PC-3 (cell line): ENCODE measurements at regions of chr3 and their contacts with region 1.

Region 1: DNA sequence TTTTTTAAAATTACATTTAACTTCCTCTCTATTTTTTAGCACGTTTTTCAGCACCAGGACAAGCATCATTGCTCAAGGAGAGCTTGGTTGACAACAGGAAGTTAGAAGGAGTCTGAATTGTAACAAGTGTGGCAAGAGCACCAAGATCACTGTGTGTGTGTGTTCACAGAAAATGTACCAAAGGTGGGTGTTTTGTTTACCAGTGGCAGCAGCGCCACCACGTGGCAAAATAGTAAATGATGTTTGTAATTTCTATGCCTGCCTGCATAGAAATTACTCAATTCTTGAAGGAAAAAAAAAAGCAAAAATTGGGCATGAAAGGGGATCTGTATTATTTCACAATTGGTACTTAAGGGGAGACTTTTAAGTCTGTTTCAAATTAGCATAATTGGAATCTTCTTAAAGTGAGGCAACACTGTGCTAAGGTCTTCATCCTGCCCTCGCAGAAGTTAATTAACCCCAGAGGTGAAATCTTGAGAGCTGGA is 7.4 kb upstream of the U2SURP start:
- DNase-seq: peak; percentile 72
- ATAC-seq: peak; percentile 45; the same call in 1 of the 2 replicates
- H3K4me3 ChIP-seq: no peak overlapping the region
- H3K27ac ChIP-seq: no peak overlapping the region
- H3K4me1 ChIP-seq: peaks cover 10% of the 10 kb centered on the region; the same call in 1 of the 2 replicates
- H3K27me3 ChIP-seq: no peaks in the 10 kb centered on the region
- CTCF ChIP-seq: peak; percentile 77

Region 2: GRCh38 chr3:142723968-142724681 is 269.9 kb before region 1 on chr3 and contains the start of gene TRPC1:
- CTCF ChIA-PET with region 1: no interaction called
- POLR2A ChIA-PET with region 1: no interaction called
- intact Hi-C with region 1: loop called (anchors 10 kb)
- DNase-seq: peak; percentile 67
- ATAC-seq: peak; percentile 87
- H3K4me3 ChIP-seq: peak within 1 kb of the TSS; percentile 92
- H3K27ac ChIP-seq: no peak within 1 kb of the TSS
- H3K4me1 ChIP-seq: no peaks in the 10 kb centered on the region
- H3K27me3 ChIP-seq: no peaks in the 10 kb centered on the region
- CTCF ChIP-seq: no peak
- total RNA-seq, gene TRPC1: 1.7 and 1.9 TPM in 2 replicates

Region 3: DNA sequence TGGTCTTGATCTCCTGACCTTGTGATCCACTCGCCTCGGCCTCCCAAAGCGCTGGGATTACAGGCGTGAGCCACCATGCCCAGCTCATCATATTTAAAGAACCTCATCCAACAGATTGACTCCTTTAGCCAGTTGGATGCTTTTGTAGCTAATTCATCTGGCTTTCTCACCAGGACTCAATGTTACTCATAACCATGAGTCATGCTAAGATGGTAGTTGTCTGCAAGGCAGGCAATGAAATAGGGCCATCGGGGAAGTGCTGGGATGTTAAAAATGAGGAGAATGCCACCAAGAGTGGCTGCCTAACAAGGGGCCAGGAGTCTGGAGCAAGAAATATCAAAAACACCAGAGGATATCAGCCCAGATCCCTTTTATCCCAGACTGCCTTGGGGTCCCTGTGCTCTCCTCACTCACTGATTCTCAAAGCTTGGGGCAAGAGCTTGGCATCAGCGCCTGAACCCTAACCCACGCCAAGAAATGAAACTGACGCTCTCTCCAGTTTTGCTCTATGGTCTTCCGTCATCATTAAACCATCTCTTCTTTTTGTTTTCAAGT is 97.7 kb before region 1 on chr3:
- CTCF ChIA-PET with region 1: no interaction called
- POLR2A ChIA-PET with region 1: no interaction called
- intact Hi-C with region 1: no loop called
- DNase-seq: peak; percentile 75
- ATAC-seq: peak; percentile 85
- H3K4me3 ChIP-seq: no peak overlapping the region
- H3K27ac ChIP-seq: peak overlapping the region; percentile 59
- H3K4me1 ChIP-seq: peaks cover 14% of the 10 kb centered on the region
- H3K27me3 ChIP-seq: no peaks in the 10 kb centered on the region
- CTCF ChIP-seq: no peak